Naive thymus-derived CD4-positive, alpha-beta T cell (primary cell): ENCODE measurements at regions of chr9 and their contacts with region 1.

Region 1: DNA sequence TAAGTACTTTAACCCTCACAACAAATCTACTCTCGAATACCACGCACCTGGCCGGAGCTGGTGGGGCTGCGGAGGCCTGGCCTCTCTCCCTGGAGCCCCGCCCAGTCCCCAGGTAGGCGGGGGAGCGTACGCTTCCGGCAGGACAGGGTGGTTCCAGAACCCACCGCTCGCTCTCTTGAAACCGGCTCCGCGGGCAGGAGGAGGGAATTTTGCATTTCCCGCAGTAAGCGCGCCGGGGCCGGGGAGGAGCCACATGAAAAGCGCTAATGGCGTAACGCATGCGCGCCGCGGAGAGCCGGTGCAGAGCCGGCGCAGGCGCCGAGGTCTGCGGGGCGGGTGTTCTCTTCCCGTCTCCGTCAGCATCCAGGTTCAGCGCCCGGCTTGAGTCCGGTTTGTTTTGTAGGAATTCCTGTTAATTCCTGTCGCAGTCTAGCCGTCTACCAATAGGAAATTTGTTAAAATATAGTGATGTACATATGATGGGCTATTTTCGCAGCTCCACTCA is 20.8 kb downstream of the CAVIN4 start:
- DNase-seq: peak; percentile 72 to 84 (median 80)
- ATAC-seq: peak; percentile 86
- H3K4me3 ChIP-seq: peak overlapping the region; percentile 65
- H3K4me3 Mint-ChIP-seq: peak overlapping the region; percentile 68 to 90 (median 82)
- H3K27ac ChIP-seq: peak overlapping the region; percentile 36
- H3K27ac Mint-ChIP-seq: peak overlapping the region in 8 of 9 donors; percentile 66 to 90 (median 78)
- H3K4me1 ChIP-seq: peaks cover 7 to 8% of the 10 kb centered on the region in 2 donors
- H3K4me1 Mint-ChIP-seq: peaks cover 12 to 30% (median 22%) of the 10 kb centered on the region in 7 donors
- H3K27me3 ChIP-seq: no peaks in the 10 kb centered on the region
- H3K27me3 Mint-ChIP-seq: peaks cover 0 to 27% (median 0%) of the 10 kb centered on the region in 5 donors

Region 2: DNA sequence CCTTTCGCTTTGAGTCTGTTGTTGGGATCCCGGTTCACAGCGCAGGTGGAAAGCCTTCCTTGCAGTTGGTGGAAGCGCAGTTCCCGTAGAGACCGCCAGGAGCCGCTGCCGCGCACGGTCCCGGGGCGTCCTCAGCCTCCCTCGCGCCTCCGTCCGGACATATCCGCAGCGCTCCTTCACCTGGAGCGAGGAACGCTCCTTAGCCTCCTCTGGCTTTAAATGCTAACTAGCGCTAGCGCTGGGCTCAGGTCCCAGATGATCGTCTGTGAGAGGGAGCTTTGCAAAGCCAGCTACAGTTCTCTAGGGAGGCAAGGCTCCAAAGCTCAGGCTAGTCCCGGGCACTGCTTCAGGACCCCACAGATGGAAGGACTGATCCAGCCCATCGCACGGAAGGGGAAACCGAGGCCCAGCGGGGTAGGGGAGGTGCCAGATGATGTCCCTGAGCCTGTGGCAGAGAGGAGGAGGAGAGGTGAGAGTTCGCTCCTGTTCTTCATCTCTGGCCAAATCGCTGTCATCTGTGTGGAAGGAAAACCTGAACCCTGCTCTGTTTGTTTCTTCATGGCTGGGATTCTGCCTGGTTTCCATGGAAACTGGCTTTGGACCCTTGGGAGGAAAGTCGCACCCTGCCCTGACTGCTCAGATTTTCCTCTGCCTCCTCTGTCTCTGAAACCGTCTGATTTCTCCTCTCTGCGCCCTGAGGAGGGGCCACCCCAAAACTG is 1623.5 kb before region 1 on chr9:
- CTCF ChIA-PET with region 1: no interaction called
- POLR2A ChIA-PET with region 1: no interaction called
- intact Hi-C with region 1: loop called in 1 of 2 experiments (anchors 5 kb)
- DNase-seq: peak; percentile 55 to 86 (median 75)
- ATAC-seq: peak; percentile 94
- H3K4me3 ChIP-seq: peak overlapping the region; percentile 40
- H3K4me3 Mint-ChIP-seq: peak overlapping the region in 9 of 10 donors; percentile 40 to 75 (median 59)
- H3K27ac ChIP-seq: no peak overlapping the region
- H3K27ac Mint-ChIP-seq: no peak overlapping the region
- H3K4me1 ChIP-seq: no peaks in the 10 kb centered on the region
- H3K4me1 Mint-ChIP-seq: peaks cover 0 to 16% (median 5%) of the 10 kb centered on the region in 7 donors
- H3K27me3 ChIP-seq: no peaks in the 10 kb centered on the region
- H3K27me3 Mint-ChIP-seq: peaks cover 0 to 33% (median 10%) of the 10 kb centered on the region in 5 donors

Region 3: DNA sequence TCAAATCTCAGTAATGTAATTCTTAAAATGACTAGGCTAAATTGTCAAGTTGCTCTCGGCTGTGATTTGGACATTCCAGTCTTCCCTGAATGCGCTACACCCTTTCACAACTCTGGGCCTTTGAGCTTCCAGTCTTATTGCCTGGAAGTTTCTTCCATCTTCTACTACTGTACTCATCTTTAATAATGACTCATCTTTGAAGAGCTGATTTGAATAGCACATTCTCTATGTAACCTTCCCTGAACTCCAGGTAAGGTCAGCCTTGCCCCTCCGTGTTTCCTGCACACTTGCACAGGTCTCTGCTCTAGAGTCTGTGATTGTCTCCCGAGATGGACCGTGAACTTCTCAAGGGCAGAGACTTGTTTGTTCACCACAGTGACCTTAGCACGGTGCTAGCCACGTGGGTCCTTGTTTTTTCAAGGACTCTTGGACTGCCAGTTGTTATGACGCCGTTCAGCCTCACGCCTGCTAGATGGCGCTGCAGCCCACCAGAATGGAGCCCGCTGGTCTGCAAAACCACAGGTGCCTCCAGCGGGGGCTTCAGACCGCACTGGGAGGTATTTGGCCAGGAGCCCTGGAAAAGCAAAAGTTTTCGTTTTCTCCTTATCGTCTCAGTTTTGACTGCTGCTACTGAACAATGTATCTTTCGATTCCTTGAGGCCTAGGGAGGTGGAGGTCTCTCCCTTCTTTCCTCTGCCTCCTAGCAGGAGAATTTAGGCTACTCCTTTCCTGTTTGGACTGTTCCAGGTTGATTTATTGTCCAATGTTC is 1332.3 kb before region 1 on chr9:
- CTCF ChIA-PET with region 1: no interaction called
- POLR2A ChIA-PET with region 1: no interaction called
- intact Hi-C with region 1: loop called in 1 of 2 experiments (anchors 5 kb)
- DNase-seq: peak; percentile 12 to 65 (median 34)
- ATAC-seq: peak; percentile 84
- H3K4me3 ChIP-seq: no peak overlapping the region
- H3K4me3 Mint-ChIP-seq: peak overlapping the region in 6 of 10 donors; percentile 1 to 42 (median 13)
- H3K27ac ChIP-seq: no peak overlapping the region
- H3K27ac Mint-ChIP-seq: peak overlapping the region in 1 of 9 donors; percentile 23
- H3K4me1 ChIP-seq: peaks cover 0 to 4% of the 10 kb centered on the region in 2 donors
- H3K4me1 Mint-ChIP-seq: peaks cover 0 to 13% (median 10%) of the 10 kb centered on the region in 7 donors
- H3K27me3 ChIP-seq: no peaks in the 10 kb centered on the region
- H3K27me3 Mint-ChIP-seq: peaks cover 0 to 14% (median 6%) of the 10 kb centered on the region in 5 donors

Region 4: GRCh38 chr9:100028201-100028784 is 570.4 kb before region 1 on chr9:
- CTCF ChIA-PET with region 1: interaction called, 3 read pairs
- POLR2A ChIA-PET with region 1: no interaction called
- intact Hi-C with region 1: loop called in 1 of 2 experiments (anchors 2 kb)
- DNase-seq: peak; percentile 21 to 66 (median 45)
- ATAC-seq: peak; percentile 98
- H3K4me3 ChIP-seq: no peak overlapping the region
- H3K4me3 Mint-ChIP-seq: no peak overlapping the region
- H3K27ac ChIP-seq: no peak overlapping the region
- H3K27ac Mint-ChIP-seq: peak overlapping the region in 1 of 9 donors; percentile 0
- H3K4me1 ChIP-seq: no peaks in the 10 kb centered on the region
- H3K4me1 Mint-ChIP-seq: peaks cover 4 to 12% (median 9%) of the 10 kb centered on the region in 7 donors
- H3K27me3 ChIP-seq: no peaks in the 10 kb centered on the region
- H3K27me3 Mint-ChIP-seq: no peaks in the 10 kb centered on the region

Region 5: GRCh38 chr9:100352727-100353505 is 245.8 kb before region 1 on chr9 and contains the start of gene TEX10:
- CTCF ChIA-PET with region 1: interaction called, 5 read pairs
- POLR2A ChIA-PET with region 1: no interaction called
- intact Hi-C with region 1: loop called (anchors 5 kb)
- DNase-seq: peak; percentile 80 to 94 (median 87)
- ATAC-seq: peak; percentile 96
- H3K4me3 ChIP-seq: peak within 1 kb of the TSS; percentile 79
- H3K4me3 Mint-ChIP-seq: peak within 1 kb of the TSS; percentile 87 to 99 (median 94)
- H3K27ac ChIP-seq: peak within 1 kb of the TSS; percentile 82
- H3K27ac Mint-ChIP-seq: peak within 1 kb of the TSS; percentile 77 to 94 (median 86)
- H3K4me1 ChIP-seq: peaks cover 8 to 22% of the 10 kb centered on the region in 2 donors
- H3K4me1 Mint-ChIP-seq: peaks cover 32 to 62% (median 53%) of the 10 kb centered on the region in 7 donors
- H3K27me3 ChIP-seq: no peaks in the 10 kb centered on the region
- H3K27me3 Mint-ChIP-seq: no peaks in the 10 kb centered on the region
- total RNA-seq, gene TEX10: 11.0 to 24.6 (median 18.2) TPM

Region 6: DNA sequence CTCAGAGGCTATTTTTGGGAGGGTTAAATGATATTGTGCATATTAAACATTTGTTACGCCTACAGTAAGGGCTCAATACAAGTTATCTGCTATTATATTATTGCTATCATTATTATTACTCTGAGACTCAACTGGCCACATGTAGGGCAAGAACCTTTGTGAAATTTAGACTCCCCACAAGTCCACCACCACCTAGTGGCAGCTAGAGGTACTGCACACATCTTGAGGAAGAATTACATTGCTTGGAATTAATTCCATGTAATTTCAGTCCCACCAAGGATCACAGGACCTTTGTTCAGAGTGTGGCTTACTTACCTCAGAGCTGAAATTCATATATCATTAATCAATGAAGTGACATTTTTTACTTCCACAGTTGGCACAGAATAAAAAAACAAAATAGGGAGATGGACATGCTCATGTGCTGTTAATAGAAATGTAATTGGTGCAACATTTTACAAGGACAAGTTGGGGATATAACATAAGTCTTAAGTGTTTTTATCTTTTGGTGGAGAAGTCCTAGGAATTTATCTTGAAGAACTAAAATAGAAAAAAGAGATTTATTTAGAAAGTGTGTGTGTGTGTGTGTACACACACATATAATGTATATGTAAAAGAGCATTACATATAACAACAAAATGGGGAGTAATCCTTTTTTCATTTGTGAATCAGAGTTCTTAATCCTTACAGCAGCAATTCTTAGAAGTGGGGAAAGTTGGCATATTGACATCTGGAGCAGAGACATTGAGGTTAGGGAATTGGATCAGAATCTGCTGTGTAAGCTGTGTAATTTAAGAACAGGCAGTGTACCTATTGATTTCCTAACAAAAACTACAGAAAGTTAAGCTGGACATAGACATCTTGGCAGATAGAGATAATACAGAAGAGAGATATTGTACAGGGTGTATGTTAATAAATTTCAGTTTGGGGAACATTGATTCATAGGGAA is 160.6 kb before region 1 on chr9:
- CTCF ChIA-PET with region 1: no interaction called
- POLR2A ChIA-PET with region 1: no interaction called
- intact Hi-C with region 1: loop called in 1 of 2 experiments (anchors 5 kb)
- DNase-seq: peak; percentile 22 to 68 (median 52)
- ATAC-seq: peak; percentile 81
- H3K4me3 ChIP-seq: no peak overlapping the region
- H3K4me3 Mint-ChIP-seq: no peak overlapping the region
- H3K27ac ChIP-seq: no peak overlapping the region
- H3K27ac Mint-ChIP-seq: no peak overlapping the region
- H3K4me1 ChIP-seq: no peaks in the 10 kb centered on the region
- H3K4me1 Mint-ChIP-seq: peaks cover 0 to 13% (median 3%) of the 10 kb centered on the region in 7 donors
- H3K27me3 ChIP-seq: no peaks in the 10 kb centered on the region
- H3K27me3 Mint-ChIP-seq: no peaks in the 10 kb centered on the region

Region 7: GRCh38 chr9:100498592-100498991 is 100.1 kb before region 1 on chr9:
- CTCF ChIA-PET with region 1: no interaction called
- POLR2A ChIA-PET with region 1: no interaction called
- intact Hi-C with region 1: no loop called
- DNase-seq: no peak
- ATAC-seq: no peak
- H3K4me3 ChIP-seq: no peak overlapping the region
- H3K4me3 Mint-ChIP-seq: no peak overlapping the region
- H3K27ac ChIP-seq: no peak overlapping the region
- H3K27ac Mint-ChIP-seq: no peak overlapping the region
- H3K4me1 ChIP-seq: no peaks in the 10 kb centered on the region
- H3K4me1 Mint-ChIP-seq: no peaks in the 10 kb centered on the region
- H3K27me3 ChIP-seq: no peaks in the 10 kb centered on the region
- H3K27me3 Mint-ChIP-seq: peaks cover 0 to 14% (median 4%) of the 10 kb centered on the region in 5 donors

Region 8: DNA sequence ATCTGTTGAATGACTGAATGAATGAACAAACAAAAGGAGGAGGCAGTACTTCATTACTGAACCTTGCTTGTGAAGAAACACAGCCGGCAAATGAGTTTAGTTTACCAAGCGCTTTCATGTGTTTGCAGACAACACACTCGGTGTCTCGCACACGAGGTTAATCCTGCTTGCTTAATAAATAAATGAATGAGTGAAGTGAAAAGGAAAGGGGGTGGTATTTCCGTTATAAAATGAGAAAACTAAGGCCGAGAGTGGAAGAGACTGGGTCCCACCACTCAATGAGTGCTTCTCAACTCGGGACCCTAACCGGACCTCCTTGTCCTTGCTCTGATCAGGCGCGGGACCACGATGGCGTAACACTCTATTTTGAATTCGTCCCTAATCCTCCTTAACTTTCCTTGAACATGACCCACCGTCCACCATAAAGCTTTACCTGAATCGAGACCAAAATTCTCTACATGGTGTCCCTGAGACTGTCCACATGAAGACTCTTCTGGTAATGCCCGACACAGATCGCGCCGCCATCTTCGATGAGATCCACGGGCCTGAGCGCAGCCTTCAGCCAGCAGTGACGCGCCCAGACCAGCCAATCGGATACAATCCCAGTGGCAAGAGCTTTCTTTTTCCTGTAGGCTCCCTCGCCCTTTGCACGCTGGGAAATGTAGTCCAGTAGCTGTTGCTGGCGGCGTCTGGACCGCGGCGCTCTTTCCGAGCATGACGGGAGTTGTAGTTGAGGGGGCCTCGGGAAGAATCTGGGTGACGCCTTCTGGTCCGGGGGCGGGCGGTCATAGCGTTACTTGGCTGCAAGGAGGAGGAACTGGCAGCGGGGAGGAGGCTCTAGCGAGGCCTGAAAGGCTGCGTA is 799.6 kb after region 1 on chr9 and contains the starts of genes MRPL50 and ZNF189:
- CTCF ChIA-PET with region 1: no interaction called
- POLR2A ChIA-PET with region 1: no interaction called
- intact Hi-C with region 1: loop called in 1 of 2 experiments (anchors 5 kb)
- DNase-seq: peak; percentile 81 to 99 (median 96)
- ATAC-seq: peak; percentile 97
- H3K4me3 ChIP-seq: peak within 1 kb of the TSS; percentile 90
- H3K4me3 Mint-ChIP-seq: peak within 1 kb of the TSS; percentile 93 to 100 (median 98)
- H3K27ac ChIP-seq: peak within 1 kb of the TSS; percentile 94
- H3K27ac Mint-ChIP-seq: peak within 1 kb of the TSS; percentile 97 to 100 (median 99)
- H3K4me1 ChIP-seq: peaks cover 21 to 34% of the 10 kb centered on the region in 2 donors
- H3K4me1 Mint-ChIP-seq: peaks cover 53 to 90% (median 83%) of the 10 kb centered on the region in 7 donors
- H3K27me3 ChIP-seq: no peaks in the 10 kb centered on the region
- H3K27me3 Mint-ChIP-seq: no peaks in the 10 kb centered on the region
- total RNA-seq, gene MRPL50: 6.5 to 23.8 (median 11.5) TPM
- total RNA-seq, gene ZNF189: 8.5 to 25.0 (median 14.5) TPM